Activated CD4-positive, alpha-beta memory T cell treated with anti-CD3 and anti-CD28 coated beads, Interleukin-2, amount 10 ng/mL, durations not matched to agents 7 days and 5 days (primary cell): ENCODE measurements at regions of chr9 and their contacts with region 1.

Region 1: DNA sequence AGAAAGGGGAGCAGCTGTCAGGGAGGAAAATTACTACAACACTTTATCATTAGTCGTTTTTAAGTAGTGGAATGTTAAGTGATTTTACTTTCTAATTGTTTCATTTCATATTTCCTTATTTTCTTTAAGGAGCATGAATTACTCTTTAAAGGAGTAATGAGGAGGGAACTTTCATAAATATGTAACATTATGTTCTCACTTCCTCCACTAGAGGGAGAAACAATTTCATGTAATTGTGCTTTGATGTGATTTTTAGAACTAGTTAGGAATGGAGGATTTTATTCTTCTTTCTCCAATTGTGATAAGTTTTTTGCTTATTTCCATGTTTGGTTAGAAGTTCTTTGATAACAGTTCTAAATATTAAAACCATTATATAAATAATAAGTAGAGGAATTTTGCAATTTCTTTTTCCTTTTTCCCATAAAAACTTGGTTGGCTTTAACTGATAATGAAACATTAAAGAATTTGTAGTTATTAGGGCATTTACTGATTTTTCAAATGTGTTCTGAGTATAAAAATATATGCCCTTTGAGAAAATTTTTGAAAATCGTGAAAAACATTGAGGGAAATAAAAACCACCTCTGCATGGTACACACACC is 25.6 kb downstream of the CEP78 start:
- DNase-seq: no peak
- H3K4me3 Mint-ChIP-seq: no peak overlapping the region
- H3K27ac Mint-ChIP-seq: no peak overlapping the region
- H3K4me1 Mint-ChIP-seq: no peaks in the 10 kb centered on the region
- H3K27me3 Mint-ChIP-seq: no peaks in the 10 kb centered on the region

Region 2: GRCh38 chr9:78304357-78304756 is 42.9 kb after region 1 on chr9:
- CTCF ChIA-PET with region 1: no interaction called
- POLR2A ChIA-PET with region 1: no interaction called
- DNase-seq: no peak
- H3K4me3 Mint-ChIP-seq: no peak overlapping the region
- H3K27ac Mint-ChIP-seq: no peak overlapping the region
- H3K4me1 Mint-ChIP-seq: peaks cover 17% of the 10 kb centered on the region
- H3K27me3 Mint-ChIP-seq: no peaks in the 10 kb centered on the region

Region 3: GRCh38 chr9:78369639-78370219 is 108.2 kb after region 1 on chr9:
- CTCF ChIA-PET with region 1: interaction called, 13 read pairs
- POLR2A ChIA-PET with region 1: no interaction called
- DNase-seq: peak; percentile 53
- H3K4me3 Mint-ChIP-seq: no peak overlapping the region
- H3K27ac Mint-ChIP-seq: no peak overlapping the region
- H3K4me1 Mint-ChIP-seq: no peaks in the 10 kb centered on the region
- H3K27me3 Mint-ChIP-seq: peaks cover 13% of the 10 kb centered on the region